ENCODE measurements at regions of chr17 and their contacts with region 1.

Region 1: DNA sequence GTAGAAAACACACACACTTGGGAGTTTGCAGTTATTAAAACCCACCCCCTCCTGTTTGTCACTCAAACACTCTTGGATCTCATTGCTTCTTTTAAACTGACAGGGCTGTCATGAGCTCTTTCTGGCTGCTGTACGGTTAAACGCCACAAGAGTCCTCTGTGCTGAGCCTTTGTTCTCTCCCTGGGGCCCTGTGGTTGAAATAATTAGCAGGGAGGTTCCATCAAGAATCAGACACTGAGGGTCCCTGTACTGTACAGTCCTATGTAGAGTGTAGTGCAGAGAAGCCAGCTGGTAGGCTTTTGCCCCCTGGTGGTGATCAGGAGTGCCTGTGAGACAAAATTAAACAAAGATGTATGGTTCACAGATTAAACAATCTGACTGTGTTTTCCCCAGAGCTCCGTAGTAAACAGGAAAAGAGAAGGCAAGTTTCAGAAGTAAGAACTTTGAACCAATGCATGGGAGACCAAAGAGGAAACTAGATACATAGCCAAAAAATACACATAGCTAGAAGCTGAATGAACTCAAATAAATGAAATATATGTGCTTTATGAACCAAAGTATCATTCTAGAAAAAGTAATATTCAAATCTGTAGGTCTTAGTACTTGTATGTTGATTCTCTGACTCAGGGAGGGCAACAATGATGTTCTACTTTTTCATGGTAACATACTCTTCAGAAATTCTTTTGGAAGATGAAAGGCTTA is 1.4 kb upstream of the SSH2 start:
- DNase-seq: peak; percentile 83
- H3K4me3 Mint-ChIP-seq: no peak overlapping the region
- H3K27ac Mint-ChIP-seq: no peak overlapping the region
- H3K4me1 Mint-ChIP-seq: peaks cover 25% of the 10 kb centered on the region
- H3K27me3 Mint-ChIP-seq: no peaks in the 10 kb centered on the region
- CTCF ChIP-seq: peak; percentile 72

Region 2: DNA sequence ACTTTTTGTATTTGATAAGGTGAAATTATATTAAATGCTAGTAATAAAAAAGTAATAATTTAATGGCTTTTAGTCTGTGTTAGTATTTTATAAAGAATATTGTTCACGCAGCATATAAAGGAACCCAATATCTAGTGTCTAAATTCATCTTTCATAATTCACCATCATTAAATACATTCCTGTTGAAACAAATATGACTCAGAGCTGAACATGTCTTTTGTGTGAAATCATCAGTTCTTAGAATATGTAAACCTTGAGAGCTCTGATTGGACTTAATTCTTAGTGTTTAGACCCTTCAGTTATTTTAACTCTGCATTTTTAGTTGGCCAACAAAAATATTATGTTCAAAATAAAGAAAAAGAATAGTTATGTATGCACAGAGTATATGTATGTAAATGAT is 436.4 kb before region 1 on chr17:
- CTCF ChIA-PET with region 1: no interaction called
- POLR2A ChIA-PET with region 1: no interaction called
- intact Hi-C with region 1: no loop called
- DNase-seq: peak; percentile 14
- H3K4me3 Mint-ChIP-seq: no peak overlapping the region
- H3K27ac Mint-ChIP-seq: peak overlapping the region; percentile 50
- H3K4me1 Mint-ChIP-seq: no peaks in the 10 kb centered on the region
- H3K27me3 Mint-ChIP-seq: no peaks in the 10 kb centered on the region
- CTCF ChIP-seq: no peak

Region 3: GRCh38 chr17:29579866-29580771 is 351.3 kb before region 1 on chr17:
- CTCF ChIA-PET with region 1: interaction called, 7 read pairs
- POLR2A ChIA-PET with region 1: interaction called, 8 read pairs
- intact Hi-C with region 1: loop called (anchors 1 kb)
- DNase-seq: peak; percentile 87
- H3K4me3 Mint-ChIP-seq: peak overlapping the region; percentile 50
- H3K27ac Mint-ChIP-seq: peak overlapping the region; percentile 61
- H3K4me1 Mint-ChIP-seq: peaks cover 36% of the 10 kb centered on the region
- H3K27me3 Mint-ChIP-seq: no peaks in the 10 kb centered on the region
- CTCF ChIP-seq: peak; percentile 79

Region 4: DNA sequence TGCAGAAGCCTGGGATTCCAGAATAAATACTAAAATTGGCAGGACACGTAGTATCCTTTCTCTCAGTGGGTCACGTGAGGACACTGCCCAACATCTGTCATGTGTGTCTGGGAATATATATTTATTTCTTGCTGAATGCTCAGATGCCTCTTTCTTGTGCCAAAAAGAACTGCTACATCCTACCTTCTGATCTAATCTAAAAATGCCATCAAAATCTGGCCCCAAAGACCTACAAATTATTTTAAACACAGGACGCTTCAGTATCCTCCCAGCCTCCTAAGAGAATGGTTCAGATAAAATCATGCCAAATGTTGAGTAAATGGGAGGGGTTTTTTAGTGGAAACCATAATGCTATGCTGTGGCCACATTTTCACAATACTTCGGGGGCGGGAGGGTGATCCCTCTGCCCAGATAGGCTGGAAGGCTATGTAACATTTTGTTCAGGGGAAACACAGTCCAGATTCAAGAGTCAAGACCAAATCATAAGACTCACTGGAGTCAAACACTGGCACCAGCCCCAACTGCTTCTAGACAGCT is 285.8 kb before region 1 on chr17:
- CTCF ChIA-PET with region 1: interaction called, 43 read pairs
- POLR2A ChIA-PET with region 1: interaction called, 49 read pairs
- intact Hi-C with region 1: no loop called
- DNase-seq: peak; percentile 63
- H3K4me3 Mint-ChIP-seq: peak overlapping the region; percentile 45
- H3K27ac Mint-ChIP-seq: peak overlapping the region; percentile 87
- H3K4me1 Mint-ChIP-seq: peaks cover 21% of the 10 kb centered on the region
- H3K27me3 Mint-ChIP-seq: no peaks in the 10 kb centered on the region
- CTCF ChIP-seq: no peak

Region 5: DNA sequence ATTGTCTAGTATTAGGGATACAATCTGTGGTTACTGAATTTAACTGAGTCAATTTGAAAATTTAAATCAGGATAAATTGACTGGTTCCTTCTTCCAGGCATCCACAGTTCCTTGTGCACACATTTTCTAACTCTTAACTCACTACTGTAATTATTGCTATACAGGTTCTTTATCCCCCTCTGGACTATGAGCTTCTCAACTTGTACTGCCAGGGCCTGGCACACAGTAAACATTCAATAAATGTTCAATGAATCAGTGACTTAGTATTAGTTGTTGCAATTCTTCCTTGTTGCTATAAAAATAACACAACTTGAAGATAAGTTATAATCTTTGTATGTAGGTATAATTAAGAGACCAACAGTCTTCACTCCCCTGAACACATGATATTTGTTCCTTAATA is 69.3 kb before region 1 on chr17:
- CTCF ChIA-PET with region 1: interaction called, 52 read pairs
- POLR2A ChIA-PET with region 1: interaction called, 14 read pairs
- intact Hi-C with region 1: no loop called
- DNase-seq: no peak
- H3K4me3 Mint-ChIP-seq: no peak overlapping the region
- H3K27ac Mint-ChIP-seq: no peak overlapping the region
- H3K4me1 Mint-ChIP-seq: no peaks in the 10 kb centered on the region
- H3K27me3 Mint-ChIP-seq: no peaks in the 10 kb centered on the region
- CTCF ChIP-seq: no peak

Region 6: DNA sequence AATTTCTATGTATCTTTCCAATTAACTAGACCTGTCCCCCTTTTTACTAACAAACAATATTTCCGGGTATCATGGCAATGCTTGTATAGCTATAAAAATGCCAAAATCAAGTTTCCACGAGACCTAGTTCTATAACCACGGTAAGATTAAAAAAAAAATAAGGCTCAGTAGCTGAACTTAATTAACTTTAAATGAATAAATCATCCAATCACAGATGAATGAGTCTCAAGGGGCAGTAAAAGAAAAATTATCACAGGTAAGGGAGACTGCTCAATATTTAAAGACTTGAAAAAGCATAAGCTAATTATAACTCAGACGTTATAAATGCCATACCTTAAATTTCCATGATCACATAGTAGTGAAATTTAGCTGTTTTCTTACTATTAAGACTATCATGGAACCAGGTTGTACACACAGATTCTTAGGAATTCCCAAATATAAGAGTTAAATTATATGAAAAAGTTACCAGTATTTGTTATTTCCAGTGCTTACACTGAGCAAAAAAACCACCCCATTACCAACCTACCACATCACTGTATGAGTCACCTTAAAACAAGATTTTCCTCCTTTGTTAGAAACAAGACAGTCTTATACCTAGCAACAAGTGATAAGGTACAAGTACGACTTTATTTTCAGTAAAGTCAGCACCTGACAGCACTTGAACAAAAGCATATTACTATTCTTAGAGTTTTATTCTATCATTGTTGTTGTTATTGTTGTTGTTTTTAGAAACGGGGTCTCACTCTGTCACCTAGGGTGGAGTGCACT is 22.0 kb before region 1 on chr17:
- CTCF ChIA-PET with region 1: interaction called, 19 read pairs
- POLR2A ChIA-PET with region 1: interaction called, 6 read pairs
- intact Hi-C with region 1: no loop called
- DNase-seq: no peak
- H3K4me3 Mint-ChIP-seq: no peak overlapping the region
- H3K27ac Mint-ChIP-seq: no peak overlapping the region
- H3K4me1 Mint-ChIP-seq: no peaks in the 10 kb centered on the region
- H3K27me3 Mint-ChIP-seq: no peaks in the 10 kb centered on the region
- CTCF ChIP-seq: no peak

Region 7: DNA sequence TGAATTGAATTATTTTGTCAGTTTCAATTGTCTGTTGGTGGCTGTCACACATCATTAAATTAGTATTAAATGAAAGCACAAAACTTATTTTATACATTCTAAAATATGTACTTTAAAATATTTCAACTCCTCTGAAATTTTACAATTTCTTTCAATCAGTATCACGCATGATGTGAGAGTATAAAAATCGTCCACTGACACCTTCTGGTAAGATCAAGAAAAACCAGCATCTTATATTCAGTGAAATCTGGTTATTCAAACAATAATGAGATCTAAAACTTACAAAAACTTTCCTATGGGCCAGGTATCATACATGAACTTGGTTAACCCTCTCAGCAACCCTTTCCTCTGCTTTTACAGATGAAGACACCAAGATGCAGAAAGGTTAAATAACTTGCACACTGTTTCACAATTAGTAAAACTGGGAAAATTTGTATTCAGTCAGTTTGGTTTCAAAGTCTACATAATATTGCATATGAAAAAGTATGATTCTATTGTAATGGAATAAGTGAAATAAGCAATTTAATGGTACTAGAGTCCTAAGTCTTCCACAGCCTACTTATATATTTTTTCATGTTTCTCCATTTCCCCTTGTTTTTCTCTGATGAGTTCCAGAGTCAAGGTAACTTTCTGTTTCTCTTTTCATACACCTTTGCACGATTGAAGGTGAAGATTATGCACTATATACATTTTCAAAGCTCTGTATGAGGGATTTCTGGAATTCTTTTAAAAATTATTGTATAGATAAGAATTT is 68.8 kb after region 1 on chr17:
- CTCF ChIA-PET with region 1: interaction called, 6 read pairs
- POLR2A ChIA-PET with region 1: interaction called, 5 read pairs
- intact Hi-C with region 1: loop called (anchors 1 kb)
- DNase-seq: peak; percentile 18
- H3K4me3 Mint-ChIP-seq: no peak overlapping the region
- H3K27ac Mint-ChIP-seq: no peak overlapping the region
- H3K4me1 Mint-ChIP-seq: peaks cover 7% of the 10 kb centered on the region
- H3K27me3 Mint-ChIP-seq: no peaks in the 10 kb centered on the region
- CTCF ChIP-seq: no peak